ENCODE measurements at regions of chr9 and their contacts with region 1.

Region 1: GRCh38 chr9:114155263-114155972 is at the start of gene COL27A1:
- DNase-seq: peak; percentile 73 to 92 (median 88)
- ATAC-seq: peak; percentile 100
- H3K4me3 ChIP-seq: no peak within 1 kb of the TSS
- H3K27ac ChIP-seq: no peak within 1 kb of the TSS
- H3K4me1 ChIP-seq: peaks cover 0 to 16% of the 10 kb centered on the region in 2 experiments; a peak in 2 of 5 replicates
- H3K27me3 ChIP-seq: peaks cover 3 to 62% of the 10 kb centered on the region in 2 experiments; a peak in 4 of 5 replicates
- CTCF ChIP-seq: peak; percentile 70 to 89 (median 79)
- EP300 ChIP-seq: no peak
- POLR2A ChIP-seq: no peak
- RAD21 ChIP-seq: peak; percentile 74 to 83
- polyA plus RNA-seq, gene COL27A1: not detected

Region 2: DNA sequence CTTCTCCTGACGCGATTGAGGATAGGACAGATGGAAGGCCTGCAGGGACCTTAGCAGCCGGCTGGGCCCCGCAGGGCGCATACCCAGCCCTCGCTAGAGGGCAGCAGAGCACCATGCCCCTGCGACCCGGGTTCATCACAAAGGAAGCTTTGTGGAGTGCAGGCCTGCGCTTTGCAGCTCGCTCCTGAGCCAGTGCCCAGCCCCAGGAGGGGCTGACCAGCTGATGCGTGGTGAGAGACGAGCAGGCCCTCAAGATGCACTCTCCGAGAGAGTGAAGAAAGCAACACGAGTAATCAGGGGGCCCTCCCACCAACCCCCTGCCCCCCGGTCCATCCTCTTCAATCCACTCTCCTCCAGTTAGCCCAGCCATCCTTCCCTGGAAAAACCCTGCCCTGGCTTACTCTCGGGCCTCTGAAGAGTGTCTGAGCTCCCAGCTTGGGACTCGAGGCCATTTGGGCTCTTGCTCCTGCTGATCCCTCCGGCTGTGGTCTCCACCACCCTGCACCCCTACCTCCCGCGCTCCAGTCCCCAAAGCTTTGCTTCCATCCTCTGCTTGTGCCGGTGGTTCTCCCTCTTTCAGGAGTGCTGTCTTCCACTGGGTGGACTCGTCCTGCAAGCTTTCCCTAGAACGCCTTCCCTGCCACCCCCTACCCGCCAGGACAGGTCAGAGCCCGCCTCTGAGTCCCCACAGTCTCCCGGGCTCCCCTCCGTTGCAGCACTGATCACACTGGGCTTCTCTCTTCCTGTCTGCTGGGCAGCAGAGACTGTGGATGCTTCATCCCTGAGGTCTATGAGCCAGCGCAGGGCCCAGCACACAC is 47.2 kb before region 1 on chr9:
- CTCF ChIA-PET with region 1: no interaction called
- POLR2A ChIA-PET with region 1: interaction called, 4 read pairs
- in situ Hi-C with region 1: no loop called
- intact Hi-C with region 1: loop called (anchors 5 kb)
- DNase-seq: peak; percentile 75 to 82 (median 80)
- ATAC-seq: peak; percentile 100
- H3K4me3 ChIP-seq: no peak overlapping the region
- H3K27ac ChIP-seq: no peak overlapping the region
- H3K4me1 ChIP-seq: peaks cover 0 to 4% of the 10 kb centered on the region in 2 experiments; a peak in 1 of 5 replicates
- H3K27me3 ChIP-seq: peaks cover 0 to 19% of the 10 kb centered on the region in 2 experiments; a peak in 3 of 5 replicates
- CTCF ChIP-seq: peak; percentile 89 to 95 (median 91)
- EP300 ChIP-seq: no peak
- POLR2A ChIP-seq: no peak
- RAD21 ChIP-seq: peak; percentile 70 to 87

Region 3: DNA sequence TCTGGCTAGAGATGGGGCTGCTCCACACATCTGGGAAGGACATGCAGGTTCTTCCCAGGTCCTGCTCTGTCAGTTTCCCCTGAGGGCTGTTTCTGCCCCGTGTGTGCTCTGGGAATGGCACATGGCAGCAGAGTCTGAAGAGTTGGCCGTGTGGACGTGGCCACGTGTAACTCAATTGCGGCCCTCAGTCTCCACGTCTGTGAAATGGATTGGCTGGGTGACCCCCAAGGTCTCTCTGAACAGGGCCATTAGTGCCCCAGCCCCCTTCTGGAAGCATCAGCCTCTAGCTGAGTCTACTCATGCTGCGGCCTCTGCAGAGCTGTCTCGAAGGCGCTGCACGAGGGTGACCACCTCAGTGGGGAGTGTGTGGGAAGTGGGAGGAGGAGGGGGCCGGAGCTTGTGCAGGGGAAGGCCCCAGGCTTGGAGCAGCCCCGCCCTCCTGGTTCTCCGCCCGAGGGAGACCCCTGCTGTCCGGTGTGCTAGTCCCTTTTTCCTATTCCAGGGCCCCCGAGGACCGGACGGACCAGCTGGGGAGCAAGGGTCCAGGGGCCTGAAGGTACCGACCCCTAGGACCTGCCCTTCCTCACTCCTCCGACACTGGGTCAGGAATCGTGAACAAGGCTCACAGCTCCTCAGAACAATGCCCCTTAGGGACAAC is 108.6 kb after region 1 on chr9:
- CTCF ChIA-PET with region 1: no interaction called
- POLR2A ChIA-PET with region 1: no interaction called
- in situ Hi-C with region 1: no loop called
- intact Hi-C with region 1: loop called (anchors 5 kb)
- DNase-seq: peak; percentile 37 to 58 (median 51)
- ATAC-seq: peak; percentile 78
- H3K4me3 ChIP-seq: no peak overlapping the region
- H3K27ac ChIP-seq: no peak overlapping the region
- H3K4me1 ChIP-seq: no peaks in the 10 kb centered on the region
- H3K27me3 ChIP-seq: peaks cover 0 to 68% of the 10 kb centered on the region in 2 experiments; a peak in 3 of 5 replicates
- CTCF ChIP-seq: peak; percentile 35 to 52 (median 45)
- EP300 ChIP-seq: no peak
- POLR2A ChIP-seq: no peak
- RAD21 ChIP-seq: peak; percentile 33 to 55; a peak in 3 of 4 replicates

Region 4: GRCh38 chr9:114282926-114283325 is 127.5 kb after region 1 on chr9:
- CTCF ChIA-PET with region 1: no interaction called
- POLR2A ChIA-PET with region 1: interaction called, 3 read pairs
- in situ Hi-C with region 1: loop called (anchors 10 kb)
- intact Hi-C with region 1: no loop called
- DNase-seq: no peak
- ATAC-seq: peak; percentile 66
- H3K4me3 ChIP-seq: no peak overlapping the region
- H3K27ac ChIP-seq: no peak overlapping the region
- H3K4me1 ChIP-seq: peaks cover 0 to 4% of the 10 kb centered on the region in 2 experiments; a peak in 2 of 5 replicates
- H3K27me3 ChIP-seq: peaks cover 15 to 64% of the 10 kb centered on the region in 2 experiments
- CTCF ChIP-seq: no peak
- EP300 ChIP-seq: no peak
- POLR2A ChIP-seq: no peak
- RAD21 ChIP-seq: no peak

Region 5: DNA sequence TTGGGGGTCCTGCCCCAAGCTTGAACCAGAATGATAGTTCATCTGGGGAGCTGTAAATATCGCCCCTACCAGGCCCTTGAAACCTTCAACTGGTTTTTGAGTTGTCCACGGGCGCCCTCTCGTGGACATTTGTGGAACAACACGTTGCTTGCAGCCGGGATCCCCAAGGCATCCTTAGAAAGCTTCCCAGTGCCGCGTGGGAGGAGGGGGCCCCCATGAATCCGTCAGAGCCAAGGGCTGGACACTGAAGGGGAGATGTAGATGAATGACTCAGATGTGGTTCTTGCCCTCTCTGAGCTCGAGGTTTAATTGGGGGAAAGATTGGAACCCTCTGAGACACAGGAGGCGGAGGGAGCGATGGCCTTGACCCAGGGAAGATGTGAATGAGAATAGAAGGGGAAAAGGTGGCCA is 135.7 kb after region 1 on chr9:
- CTCF ChIA-PET with region 1: interaction called, 10 read pairs
- POLR2A ChIA-PET with region 1: no interaction called
- in situ Hi-C with region 1: loop called (anchors 10 kb)
- intact Hi-C with region 1: loop called (anchors 2 kb)
- DNase-seq: peak; percentile 63 to 81 (median 78)
- ATAC-seq: peak; percentile 87
- H3K4me3 ChIP-seq: no peak overlapping the region
- H3K27ac ChIP-seq: no peak overlapping the region
- H3K4me1 ChIP-seq: no peaks in the 10 kb centered on the region; a peak in 1 of 5 replicates
- H3K27me3 ChIP-seq: peaks cover 0 to 26% of the 10 kb centered on the region in 2 experiments; a peak in 2 of 5 replicates
- CTCF ChIP-seq: peak; percentile 86 to 89 (median 89)
- EP300 ChIP-seq: no peak
- POLR2A ChIP-seq: no peak
- RAD21 ChIP-seq: peak; percentile 85 to 87